Activated T-helper 2 cell treated with anti-CD3 and anti-CD28 coated beads, Interferon-gamma antibody, Interleukin-2, Interleukin-4, amounts not matched to agents 10 μg/mL and 5 μg/mL and 100 μg/mL, durations not matched to agents 14 hours and 24 hours and 36 hours (primary cell): ENCODE measurements at regions of chr9 and their contacts with region 1.

Region 1: GRCh38 chr9:114366334-114367128 is 21.3 kb downstream of the AKNA start:
- DNase-seq: peak; percentile 35
- H3K4me3 Mint-ChIP-seq: peak overlapping the region; percentile 69
- H3K27ac Mint-ChIP-seq: peak overlapping the region; percentile 90
- H3K4me1 Mint-ChIP-seq: peaks cover 74% of the 10 kb centered on the region
- H3K27me3 Mint-ChIP-seq: no peaks in the 10 kb centered on the region

Region 2: GRCh38 chr9:114348906-114349482 is 17.5 kb before region 1 on chr9:
- intact Hi-C with region 1: loop called (anchors 1 kb)
- DNase-seq: peak; percentile 50
- H3K4me3 Mint-ChIP-seq: peak overlapping the region; percentile 5
- H3K27ac Mint-ChIP-seq: peak overlapping the region; percentile 93
- H3K4me1 Mint-ChIP-seq: peaks cover 44% of the 10 kb centered on the region
- H3K27me3 Mint-ChIP-seq: no peaks in the 10 kb centered on the region